ENCODE measurements at regions of chr5 and their contacts with region 1.

Region 1: GRCh38 chr5:149448831-149449714 is 70.0 kb upstream of the IL17B start:
- H3K4me3 ChIP-seq: no peak overlapping the region
- H3K27ac ChIP-seq: no peak overlapping the region
- H3K4me1 ChIP-seq: no peaks in the 10 kb centered on the region
- CTCF ChIP-seq: no peak

Region 2: GRCh38 chr5:149567226-149567625 is 118.2 kb after region 1 on chr5:
- CTCF ChIA-PET with region 1: interaction called, 30 read pairs
- POLR2A ChIA-PET with region 1: interaction called, 7 read pairs
- H3K4me3 ChIP-seq: no peak overlapping the region
- H3K27ac ChIP-seq: no peak overlapping the region
- H3K4me1 ChIP-seq: no peaks in the 10 kb centered on the region
- CTCF ChIP-seq: no peak

Region 3: GRCh38 chr5:149636851-149637246 is 187.8 kb after region 1 on chr5:
- CTCF ChIA-PET with region 1: no interaction called
- POLR2A ChIA-PET with region 1: no interaction called
- H3K4me3 ChIP-seq: no peak overlapping the region
- H3K27ac ChIP-seq: no peak overlapping the region
- H3K4me1 ChIP-seq: no peaks in the 10 kb centered on the region
- CTCF ChIP-seq: peak; percentile 95